ENCODE measurements at regions of chr1 and their contacts with region 1.

Region 1: DNA sequence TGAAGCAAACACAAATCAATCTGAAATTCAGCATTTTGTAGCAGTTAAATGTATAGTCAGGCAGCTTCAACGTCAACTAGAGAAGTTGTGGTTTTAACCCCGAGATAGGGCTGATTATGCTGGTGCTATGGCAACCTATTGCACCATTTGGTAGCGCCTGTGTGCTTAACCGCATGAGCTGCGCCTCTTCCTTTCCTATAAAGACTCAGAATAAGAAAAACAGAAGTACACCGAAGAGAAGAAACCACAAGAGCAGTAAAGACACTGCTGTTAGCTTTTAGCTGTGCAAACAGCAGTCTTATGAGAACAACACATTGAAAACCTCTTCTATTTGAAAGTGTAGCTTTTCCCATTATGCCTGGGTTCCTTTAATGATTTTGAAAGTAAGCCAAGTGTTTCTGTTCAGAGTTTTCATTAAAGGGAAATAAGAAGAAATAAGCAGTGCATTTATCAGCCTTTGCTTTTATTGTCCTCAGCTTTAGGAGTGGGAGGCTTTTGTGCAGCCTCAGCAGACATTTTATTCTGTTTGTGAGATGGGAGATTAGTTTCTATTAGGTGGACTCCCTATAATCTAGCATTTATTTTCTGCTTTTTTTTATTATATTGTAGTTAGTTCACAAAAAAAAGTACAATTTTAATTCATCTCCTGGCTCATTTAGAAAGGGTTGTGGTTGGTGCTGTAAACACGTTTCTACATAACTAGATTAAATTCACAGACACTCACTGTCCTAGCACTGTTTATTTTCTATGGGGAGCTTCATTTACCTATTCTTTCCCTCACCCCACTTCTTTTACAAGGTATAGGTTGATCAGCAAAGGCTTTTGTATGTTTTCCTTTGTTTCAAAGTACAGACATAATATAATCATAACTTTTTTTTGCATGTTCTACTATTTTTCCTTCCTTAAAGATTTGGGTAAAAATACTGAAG is 43.3 kb downstream of the PTPRC start:
- DNase-seq: peak; percentile 98
- H3K4me3 ChIP-seq: peak overlapping the region; percentile 59
- H3K27ac ChIP-seq: peak overlapping the region; percentile 99
- H3K4me1 ChIP-seq: peaks cover 98% of the 10 kb centered on the region
- CTCF ChIP-seq: no peak

Region 2: DNA sequence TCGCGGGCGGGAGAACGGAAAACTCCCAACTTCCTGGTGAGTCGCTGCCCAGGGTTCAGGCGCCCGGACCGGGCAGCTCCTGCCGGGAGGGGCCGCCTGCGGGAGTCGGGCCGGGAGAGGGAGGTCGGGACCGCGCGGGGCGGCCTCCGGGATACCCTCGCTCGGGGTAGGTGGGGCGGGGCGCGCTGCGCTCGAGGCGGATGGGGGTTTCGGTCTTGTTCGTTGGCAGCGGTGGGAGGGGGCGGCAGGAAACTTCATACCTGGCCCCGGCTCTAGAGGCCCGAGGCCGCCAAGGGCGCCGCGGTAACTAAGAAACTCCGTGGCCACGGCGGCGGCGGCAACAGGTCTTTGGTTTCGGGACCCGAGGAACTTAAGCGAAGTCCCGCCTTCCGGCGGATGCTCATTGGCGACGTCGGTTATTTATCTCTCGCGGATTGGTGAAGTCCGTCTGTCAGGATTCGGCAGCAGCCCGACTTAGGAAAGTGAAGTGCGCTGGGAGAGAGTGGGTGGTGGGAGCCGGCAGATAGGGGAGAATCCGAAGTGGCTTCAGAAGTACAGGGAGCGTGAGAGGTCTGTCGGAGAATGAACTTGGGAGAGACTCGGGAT is 524.8 kb before region 1 on chr1:
- CTCF ChIA-PET with region 1: no interaction called
- POLR2A ChIA-PET with region 1: interaction called, 5 read pairs
- intact Hi-C with region 1: loop called (anchors 2 kb)
- DNase-seq: peak; percentile 91
- H3K4me3 ChIP-seq: peak overlapping the region; percentile 97
- H3K27ac ChIP-seq: peak overlapping the region; percentile 70
- H3K4me1 ChIP-seq: peaks cover 30% of the 10 kb centered on the region
- CTCF ChIP-seq: no peak

Region 3: GRCh38 chr1:198534548-198535418 is 147.3 kb before region 1 on chr1:
- CTCF ChIA-PET with region 1: no interaction called
- POLR2A ChIA-PET with region 1: interaction called, 14 read pairs
- intact Hi-C with region 1: loop called (anchors 5 kb)
- DNase-seq: peak; percentile 29
- H3K4me3 ChIP-seq: peak overlapping the region; percentile 14
- H3K27ac ChIP-seq: peak overlapping the region; percentile 41
- H3K4me1 ChIP-seq: peaks cover 62% of the 10 kb centered on the region
- CTCF ChIP-seq: no peak

Region 4: GRCh38 chr1:198630863-198631262 is 51.2 kb before region 1 on chr1:
- CTCF ChIA-PET with region 1: no interaction called
- POLR2A ChIA-PET with region 1: interaction called, 410 read pairs
- intact Hi-C with region 1: no loop called
- DNase-seq: no peak
- H3K4me3 ChIP-seq: peak overlapping the region; percentile 36
- H3K27ac ChIP-seq: peak overlapping the region; percentile 50
- H3K4me1 ChIP-seq: peaks cover 90% of the 10 kb centered on the region
- CTCF ChIP-seq: no peak

Region 5: DNA sequence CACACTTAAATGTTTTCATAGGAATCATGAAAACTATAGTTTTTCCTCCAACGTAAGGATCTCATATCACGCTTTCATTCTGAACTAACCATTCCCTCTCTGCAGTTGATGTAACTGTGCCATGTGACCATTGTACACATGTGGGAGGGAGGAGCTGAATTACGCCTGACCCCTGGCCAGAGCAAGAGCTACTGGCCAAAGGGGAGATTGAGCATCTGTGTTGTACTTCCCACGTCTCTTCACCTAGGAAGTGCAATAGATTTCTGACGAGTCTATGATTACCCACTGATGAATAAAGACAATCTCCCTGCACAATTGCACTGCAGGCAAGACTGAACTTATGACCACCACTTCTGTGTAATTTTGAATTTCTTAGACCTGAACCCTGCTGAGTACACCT is 19.3 kb before region 1 on chr1:
- CTCF ChIA-PET with region 1: interaction called, 5 read pairs
- POLR2A ChIA-PET with region 1: interaction called, 36 read pairs
- intact Hi-C with region 1: loop called (anchors 1 kb)
- DNase-seq: no peak
- H3K4me3 ChIP-seq: no peak overlapping the region
- H3K27ac ChIP-seq: peak overlapping the region; percentile 46
- H3K4me1 ChIP-seq: peaks cover 74% of the 10 kb centered on the region
- CTCF ChIP-seq: no peak

Region 6: GRCh38 chr1:198929961-198930599 is 248.0 kb after region 1 on chr1:
- CTCF ChIA-PET with region 1: interaction called, 3 read pairs
- POLR2A ChIA-PET with region 1: interaction called, 19 read pairs
- intact Hi-C with region 1: loop called (anchors 5 kb)
- DNase-seq: peak; percentile 72
- H3K4me3 ChIP-seq: peak overlapping the region; percentile 67
- H3K27ac ChIP-seq: peak overlapping the region; percentile 76
- H3K4me1 ChIP-seq: peaks cover 36% of the 10 kb centered on the region
- CTCF ChIP-seq: no peak

Measured in OCI-LY7 (cell line).